ENCODE measurements at regions of chr1 and their contacts with region 1.

Region 1: GRCh38 chr1:201505505-201505893 is 1.4 kb downstream of the CSRP1 start:
- DNase-seq: no peak
- H3K4me3 ChIP-seq: peak overlapping the region; percentile 70 to 76
- H3K27ac ChIP-seq: peak overlapping the region; percentile 91 to 96
- H3K4me1 ChIP-seq: peaks cover 18% of the 10 kb centered on the region
- H3K27me3 ChIP-seq: no peaks in the 10 kb centered on the region
- CTCF ChIP-seq: no peak
- POLR2A ChIP-seq: no peak

Region 2: DNA sequence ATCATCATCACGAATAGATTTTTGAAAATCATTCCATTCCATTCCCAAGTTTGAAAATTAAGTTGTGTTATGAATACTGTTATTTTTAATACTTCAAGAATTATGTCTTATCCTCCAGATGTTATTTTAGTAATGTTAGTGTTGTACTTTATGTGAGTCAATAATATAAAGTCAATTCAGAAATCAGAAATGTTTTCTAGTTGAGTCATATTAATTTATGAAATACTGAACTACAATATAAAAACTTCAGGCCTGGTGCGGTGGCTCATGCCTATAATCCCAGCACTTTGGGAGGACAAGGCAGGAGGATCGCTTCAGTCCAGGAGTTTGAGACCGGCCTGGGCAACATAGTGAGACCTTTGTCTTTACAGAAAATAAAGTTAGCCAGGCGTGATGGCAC is 671.1 kb before region 1 on chr1:
- intact Hi-C with region 1: no loop called
- DNase-seq: no peak
- H3K4me3 ChIP-seq: no peak overlapping the region
- H3K27ac ChIP-seq: no peak overlapping the region
- H3K4me1 ChIP-seq: no peaks in the 10 kb centered on the region
- H3K27me3 ChIP-seq: no peaks in the 10 kb centered on the region
- CTCF ChIP-seq: no peak
- POLR2A ChIP-seq: no peak

Region 3: DNA sequence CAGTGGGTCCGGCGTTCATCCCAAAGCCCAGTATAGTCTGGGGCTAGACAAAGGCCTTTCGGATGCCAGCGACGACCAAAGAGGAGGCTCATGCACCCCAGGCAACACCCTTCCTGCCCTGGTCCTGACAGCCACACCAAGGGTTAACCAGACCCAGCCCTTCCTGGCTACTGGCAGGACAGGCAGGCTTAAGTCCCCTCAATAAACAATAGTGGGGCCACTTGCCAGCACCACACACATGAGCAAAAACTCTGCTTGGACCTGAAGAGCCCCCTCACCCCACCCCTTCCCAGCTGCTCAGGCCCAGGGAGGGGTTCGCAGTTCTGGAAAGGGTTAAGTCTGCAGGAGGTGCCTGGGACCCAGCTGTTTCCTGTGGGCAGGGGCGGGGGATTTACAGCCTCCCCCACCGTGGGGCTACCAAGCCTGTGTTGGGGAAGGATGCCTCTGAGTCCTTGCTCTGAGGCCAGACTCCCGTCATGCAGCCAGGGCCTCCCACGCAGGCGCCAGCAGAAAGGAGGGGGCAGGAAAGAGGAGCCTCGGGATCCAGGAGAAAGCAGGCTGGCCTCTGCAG is 54.7 kb before region 1 on chr1:
- intact Hi-C with region 1: no loop called
- DNase-seq: no peak
- H3K4me3 ChIP-seq: no peak overlapping the region
- H3K27ac ChIP-seq: peak overlapping the region; percentile 4 to 35
- H3K4me1 ChIP-seq: peaks cover 4% of the 10 kb centered on the region
- H3K27me3 ChIP-seq: no peaks in the 10 kb centered on the region
- CTCF ChIP-seq: no peak
- POLR2A ChIP-seq: no peak

Region 4: DNA sequence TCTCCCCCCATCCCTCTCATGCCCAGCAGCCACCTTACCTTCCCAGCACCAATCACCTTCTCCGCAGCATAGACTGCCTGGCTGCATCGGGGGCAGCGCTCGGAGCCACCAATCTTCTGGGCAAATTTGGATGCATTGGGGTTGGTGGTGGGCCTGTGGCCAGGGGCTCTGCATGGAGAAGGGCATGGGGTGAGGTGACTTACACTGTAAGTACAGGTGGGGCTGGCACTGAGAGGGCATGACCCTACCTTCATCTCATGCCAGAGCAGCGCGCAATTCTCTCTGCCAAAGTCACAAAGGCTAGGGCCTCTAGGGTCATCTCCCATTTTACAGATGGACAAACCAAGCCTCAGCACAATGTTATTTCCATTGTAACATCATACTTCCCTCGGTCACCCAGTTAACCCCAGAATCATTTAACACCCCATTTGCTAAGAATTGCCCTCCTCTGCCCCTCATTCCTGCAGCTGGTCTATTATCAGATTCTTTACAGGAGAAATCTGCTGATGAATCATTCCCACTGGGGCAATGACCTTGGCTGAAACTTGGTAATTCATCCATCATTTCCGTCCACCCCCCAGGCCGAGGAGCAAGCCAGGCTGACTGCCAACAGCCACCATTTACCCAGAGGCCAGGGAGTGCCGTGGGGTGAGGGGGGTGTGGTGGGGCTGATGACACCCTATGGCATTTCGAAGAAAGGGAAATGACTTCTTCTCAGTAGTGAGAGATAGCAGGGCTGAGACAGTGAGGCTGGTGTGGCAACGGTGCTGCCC is 16.5 kb before region 1 on chr1:
- intact Hi-C with region 1: loop called (anchors 2 kb)
- DNase-seq: no peak
- H3K4me3 ChIP-seq: no peak overlapping the region
- H3K27ac ChIP-seq: peak overlapping the region; percentile 28 to 91
- H3K4me1 ChIP-seq: peaks cover 8% of the 10 kb centered on the region
- H3K27me3 ChIP-seq: no peaks in the 10 kb centered on the region
- CTCF ChIP-seq: no peak
- POLR2A ChIP-seq: no peak

Measured in prostate gland (tissue), 2 donors.